Heart right ventricle (tissue), 16 donors: ENCODE measurements at regions of chr3 and their contacts with region 1.

Region 1: DNA sequence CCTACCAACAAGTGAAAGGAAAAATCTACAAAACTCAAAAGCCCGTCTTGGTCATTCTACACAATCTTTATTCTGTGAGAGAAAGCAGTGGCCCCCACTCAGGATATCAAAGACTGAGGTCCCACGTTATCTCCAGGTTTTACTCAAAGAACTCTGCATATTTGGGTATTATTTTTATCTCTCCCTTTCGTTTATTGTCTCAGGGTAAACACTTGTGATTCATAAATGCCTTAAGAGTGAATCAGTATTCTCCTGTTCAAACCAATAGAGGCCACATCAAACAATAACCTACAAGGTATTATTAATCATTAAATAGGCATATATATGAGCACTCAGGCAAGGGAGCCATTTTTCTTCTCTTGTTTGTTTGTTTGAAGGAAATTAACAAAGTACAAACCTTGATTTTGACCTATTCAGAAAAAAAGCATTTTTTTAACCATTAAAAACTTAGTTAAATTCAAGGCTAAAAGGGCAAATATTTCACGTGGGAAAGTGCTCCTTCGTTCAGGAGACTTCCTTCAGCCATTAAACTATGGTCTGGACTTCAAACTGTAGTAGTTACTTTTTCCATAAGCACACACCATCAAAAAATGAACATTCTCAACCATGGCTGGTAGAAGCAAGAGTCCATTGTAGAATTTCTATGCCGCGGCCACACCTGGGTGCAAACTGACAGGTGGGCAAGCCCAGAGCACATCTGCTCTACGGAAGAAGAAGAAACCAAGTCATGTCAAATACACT is 13.9 kb upstream of the HES1 start:
- DNase-seq: no peak
- ATAC-seq: no peak
- H3K4me3 ChIP-seq: no peak overlapping the region
- H3K27ac ChIP-seq: no peak overlapping the region
- H3K4me1 ChIP-seq: peaks cover 0 to 11% (median 0%) of the 10 kb centered on the region in 9 donors
- H3K27me3 ChIP-seq: peaks cover 0 to 81% (median 22%) of the 10 kb centered on the region in 7 donors
- CTCF ChIP-seq: no peak

Region 2: GRCh38 chr3:194009892-194010533 is 112.0 kb before region 1 on chr3:
- intact Hi-C with region 1: loop called in 1 of 10 experiments (anchors 5 kb)
- DNase-seq: peak in 1 of 2 donors; percentile 12
- ATAC-seq: peak in 6 of 8 donors; percentile 46 to 73 (median 52)
- H3K4me3 ChIP-seq: no peak overlapping the region
- H3K27ac ChIP-seq: no peak overlapping the region
- H3K4me1 ChIP-seq: peaks cover 0 to 17% (median 5%) of the 10 kb centered on the region in 9 donors
- H3K27me3 ChIP-seq: peaks cover 0 to 82% (median 26%) of the 10 kb centered on the region in 7 donors
- CTCF ChIP-seq: peak in 1 of 9 donors; percentile 6